ENCODE measurements at regions of chr17 and their contacts with region 1.

Region 1: DNA sequence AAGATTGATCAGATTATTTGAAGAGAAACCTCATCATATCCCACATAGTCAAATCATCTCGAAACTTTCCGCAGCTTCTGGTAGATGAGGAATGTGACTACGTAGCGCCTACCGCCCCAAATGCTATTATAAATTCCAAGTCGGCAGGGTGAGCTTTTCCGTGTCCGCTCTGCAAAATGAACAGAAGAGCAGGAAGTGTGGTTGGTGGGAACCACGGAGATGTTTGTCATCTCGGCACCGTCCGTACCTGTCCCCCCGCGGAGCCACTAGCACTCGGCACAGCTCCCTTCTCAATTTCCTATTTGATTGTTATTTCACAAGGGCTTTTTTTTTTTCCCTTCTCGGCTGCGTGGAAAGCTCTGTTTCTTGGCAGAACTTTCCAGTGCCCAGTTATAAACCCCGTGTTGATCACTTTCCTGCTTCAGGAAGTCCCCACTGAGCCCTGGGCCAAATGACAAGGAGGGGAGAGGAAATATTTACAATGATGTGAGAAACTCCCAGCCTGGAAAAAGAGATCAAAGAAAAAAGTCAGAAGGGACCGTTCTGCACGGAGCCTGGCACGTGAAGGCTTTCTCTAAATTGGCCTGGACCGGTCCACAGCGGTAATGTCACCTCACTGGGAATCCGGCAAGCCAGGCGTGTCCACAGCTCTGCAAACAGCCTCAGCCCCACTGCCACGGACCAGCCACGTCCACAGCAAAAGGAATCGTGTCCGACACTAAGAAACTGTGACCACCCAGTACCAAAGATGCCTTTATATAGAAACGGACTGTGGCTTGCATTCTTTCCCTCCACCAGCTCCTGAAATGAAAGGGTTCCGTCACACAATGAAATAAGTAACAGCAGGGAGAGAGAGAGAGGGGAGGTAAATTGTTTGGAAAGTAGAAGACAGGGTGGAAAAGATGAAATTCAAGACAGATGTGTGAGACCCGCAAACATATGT is 65.0 kb downstream of the MRM3 start:
- DNase-seq: peak; percentile 79
- H3K4me3 ChIP-seq: peak overlapping the region; percentile 25 to 68 (median 36)
- H3K27ac ChIP-seq: peak overlapping the region; percentile 32
- H3K4me1 ChIP-seq: peaks cover 26% of the 10 kb centered on the region
- H3K27me3 ChIP-seq: peaks cover 0 to 3% of the 10 kb centered on the region in 2 experiments
- CTCF ChIP-seq: no peak
- POLR2A ChIP-seq: no peak

Region 2: GRCh38 chr17:781805-782731 is 65.1 kb before region 1 on chr17 and contains the starts of genes GLOD4 and MRM3:
- CTCF ChIA-PET with region 1: no interaction called
- POLR2A ChIA-PET with region 1: no interaction called
- dilution Hi-C with region 1: no loop called
- intact Hi-C with region 1: loop called (anchors 2 kb)
- DNase-seq: peak; percentile 92
- H3K4me3 ChIP-seq: peak within 1 kb of the TSS; percentile 66 to 91 (median 83)
- H3K27ac ChIP-seq: peak within 1 kb of the TSS; percentile 29
- H3K4me1 ChIP-seq: peaks cover 18% of the 10 kb centered on the region
- H3K27me3 ChIP-seq: no peaks in the 10 kb centered on the region
- CTCF ChIP-seq: no peak
- POLR2A ChIP-seq: peak; percentile 92
- total RNA-seq, gene GLOD4: 81.8 and 84.2 TPM in 2 replicates
- total RNA-seq, gene MRM3: 19.0 and 19.2 TPM in 2 replicates

Region 3: GRCh38 chr17:859061-859823 is 12.1 kb after region 1 on chr17:
- CTCF ChIA-PET with region 1: interaction called, 9 read pairs
- POLR2A ChIA-PET with region 1: no interaction called
- dilution Hi-C with region 1: no loop called
- intact Hi-C with region 1: loop called (anchors 1 kb)
- DNase-seq: peak; percentile 78
- H3K4me3 ChIP-seq: peak overlapping the region in 1 of 3 experiments; percentile 1
- H3K27ac ChIP-seq: peak overlapping the region; percentile 79
- H3K4me1 ChIP-seq: peaks cover 15% of the 10 kb centered on the region
- H3K27me3 ChIP-seq: no peaks in the 10 kb centered on the region
- CTCF ChIP-seq: no peak
- POLR2A ChIP-seq: no peak

Measured in endothelial cell of umbilical vein (primary cell).